ENCODE measurements at regions of chr14 and their contacts with region 1.

Region 1: DNA sequence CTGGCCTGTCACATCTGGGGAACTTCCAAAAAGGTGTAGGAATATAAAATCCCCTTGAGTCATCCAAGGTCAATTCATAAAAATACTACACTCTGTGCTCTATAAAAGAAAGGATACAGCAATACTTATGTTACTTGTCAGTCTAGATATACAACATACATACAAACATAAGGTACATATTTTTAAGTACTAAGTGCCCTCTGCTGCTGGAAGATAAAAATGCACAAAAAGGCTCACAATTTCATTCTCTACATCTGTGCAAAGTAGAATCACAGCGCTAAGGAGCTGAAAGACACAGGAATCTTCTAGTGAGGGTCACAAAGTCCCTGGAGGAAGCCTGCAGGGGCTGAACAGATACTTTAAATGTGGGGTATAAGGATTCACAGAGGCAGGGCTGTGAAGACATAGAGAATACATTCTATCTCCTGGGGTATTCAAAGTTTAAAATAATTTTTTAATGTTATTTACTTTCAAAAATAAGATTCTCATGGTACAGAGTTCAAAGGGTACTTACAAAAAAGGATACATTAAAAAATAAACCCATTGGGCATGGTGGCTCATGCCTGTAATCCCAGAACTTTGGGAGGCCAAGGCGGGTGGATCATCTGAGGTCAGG is 10.2 kb upstream of the GOLGA5 start:
- DNase-seq: peak; percentile 54
- CTCF ChIP-seq: peak; percentile 71

Region 2: GRCh38 chr14:92690171-92691036 is 93.5 kb before region 1 on chr14:
- CTCF ChIA-PET with region 1: interaction called, 10 read pairs
- POLR2A ChIA-PET with region 1: no interaction called
- DNase-seq: no peak
- CTCF ChIP-seq: peak; percentile 73

Region 3: DNA sequence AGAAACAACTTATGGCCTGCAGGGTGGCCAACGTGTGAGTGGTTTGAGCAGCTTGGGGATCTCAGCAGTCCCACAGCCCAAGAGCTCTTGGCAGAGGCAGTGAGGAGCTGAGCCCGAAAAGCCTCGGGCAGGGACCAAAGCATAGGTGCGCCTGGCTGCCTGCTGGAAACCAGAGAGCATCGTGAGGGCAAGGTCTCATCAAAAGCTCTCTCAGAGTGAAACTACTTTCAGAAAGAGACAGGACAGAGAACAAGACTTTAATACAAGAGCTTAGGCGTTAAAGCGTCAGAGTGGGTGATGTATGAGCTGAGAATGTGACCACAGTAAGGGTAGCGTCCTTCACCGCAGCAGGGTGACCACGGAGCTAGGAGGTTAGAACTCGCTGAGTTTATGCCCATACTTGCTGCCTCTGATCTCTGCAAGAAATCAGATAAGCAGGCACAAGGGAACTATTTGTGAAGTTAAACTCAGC is 66.3 kb before region 1 on chr14:
- CTCF ChIA-PET with region 1: interaction called, 177 read pairs
- POLR2A ChIA-PET with region 1: no interaction called
- DNase-seq: no peak
- CTCF ChIP-seq: no peak

Region 4: GRCh38 chr14:92748259-92749016 is 35.5 kb before region 1 on chr14 and contains the start of gene LGMN:
- CTCF ChIA-PET with region 1: interaction called, 11 read pairs
- POLR2A ChIA-PET with region 1: interaction called, 3 read pairs
- DNase-seq: peak; percentile 93
- CTCF ChIP-seq: no peak

Measured in GM10248 (cell line).